AG04449 (cell line): ENCODE measurements at regions of chr4 and their contacts with region 1.

Region 1: DNA sequence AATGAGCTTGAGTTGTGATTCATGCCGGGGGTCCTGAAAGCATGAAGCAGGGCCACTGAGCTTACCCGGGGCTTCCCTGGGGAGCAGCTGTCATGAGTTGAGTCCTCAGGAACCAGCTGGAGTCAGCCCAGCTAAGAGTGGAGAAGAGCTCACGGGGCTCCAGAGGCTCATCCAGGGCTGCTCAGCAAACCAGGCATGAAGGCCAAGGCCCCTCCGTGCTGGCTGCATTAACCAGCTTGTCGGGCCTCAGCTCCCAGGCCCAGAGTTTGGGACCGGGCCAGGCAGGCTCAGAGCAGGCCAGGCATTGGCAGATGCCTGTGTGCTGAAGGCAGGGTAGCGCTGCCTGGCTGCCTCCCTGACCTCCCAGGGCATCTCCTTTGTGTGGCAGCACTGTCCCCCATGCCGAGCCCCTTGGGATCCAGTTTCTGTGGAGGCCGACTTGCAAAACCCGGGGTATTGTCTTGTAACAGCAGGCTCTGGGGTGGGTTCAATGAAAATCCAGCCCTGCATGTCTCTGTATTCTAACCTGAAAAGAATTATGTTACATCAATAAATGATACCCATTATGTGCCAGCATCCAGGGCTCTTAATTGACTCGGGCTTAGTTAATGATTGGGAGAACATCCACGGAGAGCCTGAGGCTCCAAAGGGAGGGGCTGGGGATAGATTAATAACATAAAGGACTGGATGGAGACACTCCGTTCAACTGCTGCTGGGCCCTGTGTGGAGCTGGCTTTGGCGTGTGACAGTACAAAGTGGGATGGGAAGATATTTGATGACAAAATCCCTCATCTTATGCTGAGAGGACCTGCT is 68.0 kb upstream of the MSX1 start:
- DNase-seq: no peak
- H3K4me3 ChIP-seq: no peak overlapping the region
- CTCF ChIP-seq: no peak

Region 2: GRCh38 chr4:4780729-4781244 is 10.7 kb before region 1 on chr4:
- CTCF ChIA-PET with region 1: no interaction called
- POLR2A ChIA-PET with region 1: interaction called, 20 read pairs
- DNase-seq: peak; percentile 44
- H3K4me3 ChIP-seq: no peak overlapping the region
- CTCF ChIP-seq: peak; percentile 13